Activated CD4-positive, alpha-beta memory T cell treated with anti-CD3 and anti-CD28 coated beads for 36 hours (primary cell): ENCODE measurements at regions of chr6 and their contacts with region 1.

Region 1: GRCh38 chr6:90274451-90275030 is 22.1 kb downstream of the BACH2 start:
- DNase-seq: peak; percentile 96
- H3K4me3 Mint-ChIP-seq: peak overlapping the region; percentile 27
- H3K27ac Mint-ChIP-seq: peak overlapping the region; percentile 87
- H3K4me1 Mint-ChIP-seq: peaks cover 86% of the 10 kb centered on the region
- H3K27me3 Mint-ChIP-seq: no peaks in the 10 kb centered on the region

Region 2: GRCh38 chr6:89952686-89953085 is 321.9 kb before region 1 on chr6:
- CTCF ChIA-PET with region 1: no interaction called
- POLR2A ChIA-PET with region 1: interaction called, 3 read pairs
- intact Hi-C with region 1: loop called (anchors 2 kb)
- DNase-seq: peak; percentile 72
- H3K4me3 Mint-ChIP-seq: peak overlapping the region; percentile 8
- H3K27ac Mint-ChIP-seq: peak overlapping the region; percentile 69
- H3K4me1 Mint-ChIP-seq: peaks cover 68% of the 10 kb centered on the region
- H3K27me3 Mint-ChIP-seq: no peaks in the 10 kb centered on the region

Region 3: GRCh38 chr6:90194371-90194841 is 80.1 kb before region 1 on chr6:
- CTCF ChIA-PET with region 1: interaction called, 3 read pairs
- POLR2A ChIA-PET with region 1: no interaction called
- intact Hi-C with region 1: loop called (anchors 5 kb)
- DNase-seq: no peak
- H3K4me3 Mint-ChIP-seq: no peak overlapping the region
- H3K27ac Mint-ChIP-seq: peak overlapping the region; percentile 49
- H3K4me1 Mint-ChIP-seq: peaks cover 59% of the 10 kb centered on the region
- H3K27me3 Mint-ChIP-seq: no peaks in the 10 kb centered on the region

Region 4: GRCh38 chr6:90230548-90231215 is 43.9 kb before region 1 on chr6:
- CTCF ChIA-PET with region 1: no interaction called
- POLR2A ChIA-PET with region 1: no interaction called
- intact Hi-C with region 1: loop called (anchors 1 kb)
- DNase-seq: no peak
- H3K4me3 Mint-ChIP-seq: no peak overlapping the region
- H3K27ac Mint-ChIP-seq: no peak overlapping the region
- H3K4me1 Mint-ChIP-seq: peaks cover 88% of the 10 kb centered on the region
- H3K27me3 Mint-ChIP-seq: no peaks in the 10 kb centered on the region

Region 5: GRCh38 chr6:90296346-90297114 is 22.0 kb after region 1 on chr6 and contains the start of gene BACH2:
- CTCF ChIA-PET with region 1: no interaction called
- POLR2A ChIA-PET with region 1: interaction called, 3 read pairs
- intact Hi-C with region 1: loop called (anchors 1 kb)
- DNase-seq: peak; percentile 97
- H3K4me3 Mint-ChIP-seq: peak within 1 kb of the TSS; percentile 79
- H3K27ac Mint-ChIP-seq: peak within 1 kb of the TSS; percentile 86
- H3K4me1 Mint-ChIP-seq: peaks cover 32% of the 10 kb centered on the region
- H3K27me3 Mint-ChIP-seq: peaks cover 9% of the 10 kb centered on the region
- total RNA-seq, gene BACH2: 49.2 to 55.4 TPM

Region 6: GRCh38 chr6:90314514-90314913 is 40.0 kb after region 1 on chr6:
- CTCF ChIA-PET with region 1: no interaction called
- POLR2A ChIA-PET with region 1: no interaction called
- intact Hi-C with region 1: no loop called
- DNase-seq: no peak
- H3K4me3 Mint-ChIP-seq: no peak overlapping the region
- H3K27ac Mint-ChIP-seq: no peak overlapping the region
- H3K4me1 Mint-ChIP-seq: peaks cover 8% of the 10 kb centered on the region
- H3K27me3 Mint-ChIP-seq: peaks cover 16% of the 10 kb centered on the region

Region 7: DNA sequence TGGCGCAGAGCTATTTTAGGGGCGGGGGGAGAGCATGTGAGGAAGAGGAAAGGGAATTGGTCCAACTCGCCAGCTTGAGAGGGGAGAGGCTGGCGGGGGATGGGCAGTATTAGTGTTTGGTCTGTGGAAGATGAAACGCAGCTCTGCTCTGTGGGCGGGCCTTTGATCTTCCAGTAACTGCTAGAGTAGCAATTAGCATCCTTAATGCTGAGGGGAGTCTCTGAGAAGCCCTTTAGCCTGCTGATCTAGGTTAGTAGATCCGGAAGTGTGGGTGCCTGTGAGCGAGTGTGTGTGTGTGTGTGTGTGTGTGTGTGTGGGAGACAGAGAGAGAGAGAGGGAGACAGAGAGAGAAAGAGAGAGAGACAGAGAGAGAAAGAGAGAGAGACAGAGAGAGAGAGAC is 139.3 kb after region 1 on chr6:
- CTCF ChIA-PET with region 1: no interaction called
- POLR2A ChIA-PET with region 1: no interaction called
- intact Hi-C with region 1: loop called (anchors 1 kb)
- DNase-seq: peak; percentile 92
- H3K4me3 Mint-ChIP-seq: peak overlapping the region; percentile 64
- H3K27ac Mint-ChIP-seq: peak overlapping the region; percentile 93
- H3K4me1 Mint-ChIP-seq: peaks cover 71% of the 10 kb centered on the region
- H3K27me3 Mint-ChIP-seq: no peaks in the 10 kb centered on the region